MCF 10A (cell line): ENCODE measurements at regions of chr6 and their contacts with region 1.

Region 1: DNA sequence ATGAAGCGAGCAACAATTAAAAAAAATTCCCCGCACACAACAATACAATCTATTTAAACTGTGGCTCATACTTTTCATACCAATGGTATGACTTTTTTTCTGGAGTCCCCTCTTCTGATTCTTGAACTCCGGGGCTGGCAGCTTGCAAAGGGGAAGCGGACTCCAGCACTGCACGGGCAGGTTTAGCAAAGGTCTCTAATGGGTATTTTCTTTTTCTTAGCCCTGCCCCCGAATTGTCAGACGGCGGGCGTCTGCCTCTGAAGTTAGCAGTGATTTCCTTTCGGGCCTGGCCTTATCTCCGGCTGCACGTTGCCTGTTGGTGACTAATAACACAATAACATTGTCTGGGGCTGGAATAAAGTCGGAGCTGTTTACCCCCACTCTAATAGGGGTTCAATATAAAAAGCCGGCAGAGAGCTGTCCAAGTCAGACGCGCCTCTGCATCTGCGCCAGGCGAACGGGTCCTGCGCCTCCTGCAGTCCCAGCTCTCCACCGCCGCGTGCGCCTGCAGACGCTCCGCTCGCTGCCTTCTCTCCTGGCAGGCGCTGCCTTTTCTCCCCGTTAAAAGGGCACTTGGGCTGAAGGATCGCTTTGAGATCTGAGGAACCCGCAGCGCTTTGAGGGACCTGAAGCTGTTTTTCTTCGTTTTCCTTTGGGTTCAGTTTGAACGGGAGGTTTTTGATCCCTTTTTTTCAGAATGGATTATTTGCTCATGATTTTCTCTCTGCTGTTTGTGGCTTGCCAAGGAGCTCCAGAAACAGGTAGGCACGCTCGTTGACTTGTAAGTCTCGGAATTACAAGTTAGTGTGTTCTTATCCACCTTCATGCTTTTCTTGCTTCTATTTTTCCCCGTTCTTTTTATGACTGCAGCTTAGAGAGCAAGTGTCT is at the start of gene EDN1:
- DNase-seq: peak; percentile 86
- H3K4me3 Mint-ChIP-seq: peak within 1 kb of the TSS; percentile 75
- H3K27ac Mint-ChIP-seq: peak within 1 kb of the TSS; percentile 94
- H3K4me1 Mint-ChIP-seq: peaks cover 55% of the 10 kb centered on the region
- H3K27me3 Mint-ChIP-seq: no peaks in the 10 kb centered on the region
- CTCF ChIP-seq: peak; percentile 39
- total RNA-seq, gene EDN1: 1.2 and 2.7 TPM in 2 replicates

Region 2: GRCh38 chr6:11585426-11586016 is 704.7 kb before region 1 on chr6:
- CTCF ChIA-PET with region 1: interaction called, 23 read pairs
- POLR2A ChIA-PET with region 1: no interaction called
- intact Hi-C with region 1: loop called (anchors 1 kb)
- DNase-seq: peak; percentile 61
- H3K4me3 Mint-ChIP-seq: no peak overlapping the region
- H3K27ac Mint-ChIP-seq: no peak overlapping the region
- H3K4me1 Mint-ChIP-seq: no peaks in the 10 kb centered on the region
- H3K27me3 Mint-ChIP-seq: no peaks in the 10 kb centered on the region
- CTCF ChIP-seq: peak; percentile 60

Region 3: GRCh38 chr6:12150812-12151432 is 139.3 kb before region 1 on chr6:
- CTCF ChIA-PET with region 1: interaction called, 9 read pairs
- POLR2A ChIA-PET with region 1: interaction called, 5 read pairs
- intact Hi-C with region 1: loop called (anchors 1 kb)
- DNase-seq: peak; percentile 57
- H3K4me3 Mint-ChIP-seq: no peak overlapping the region
- H3K27ac Mint-ChIP-seq: no peak overlapping the region
- H3K4me1 Mint-ChIP-seq: peaks cover 17% of the 10 kb centered on the region
- H3K27me3 Mint-ChIP-seq: no peaks in the 10 kb centered on the region
- CTCF ChIP-seq: peak; percentile 69

Region 4: DNA sequence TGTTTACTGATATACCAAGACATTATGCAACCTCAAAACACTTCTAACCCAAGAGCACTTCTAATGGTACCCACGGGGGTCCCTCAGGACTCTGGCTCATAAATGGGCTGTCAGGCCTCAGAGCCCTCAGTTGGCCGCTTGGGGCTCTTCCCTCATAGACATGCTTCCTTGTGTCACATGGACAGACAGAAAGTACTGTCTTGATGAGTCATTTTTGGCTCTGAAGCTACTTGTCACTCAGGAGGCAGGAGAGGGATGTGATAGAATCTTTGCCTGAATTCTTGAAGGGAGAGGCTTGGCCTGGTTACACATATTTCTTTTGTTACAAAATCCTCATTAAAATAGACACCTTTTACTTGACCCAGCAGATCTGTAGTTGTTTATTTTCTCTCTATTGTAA is 15.1 kb before region 1 on chr6:
- CTCF ChIA-PET with region 1: interaction called, 16 read pairs
- POLR2A ChIA-PET with region 1: interaction called, 34 read pairs
- intact Hi-C with region 1: no loop called
- DNase-seq: peak; percentile 55
- H3K4me3 Mint-ChIP-seq: no peak overlapping the region
- H3K27ac Mint-ChIP-seq: peak overlapping the region; percentile 8
- H3K4me1 Mint-ChIP-seq: peaks cover 29% of the 10 kb centered on the region
- H3K27me3 Mint-ChIP-seq: no peaks in the 10 kb centered on the region
- CTCF ChIP-seq: no peak

Region 5: DNA sequence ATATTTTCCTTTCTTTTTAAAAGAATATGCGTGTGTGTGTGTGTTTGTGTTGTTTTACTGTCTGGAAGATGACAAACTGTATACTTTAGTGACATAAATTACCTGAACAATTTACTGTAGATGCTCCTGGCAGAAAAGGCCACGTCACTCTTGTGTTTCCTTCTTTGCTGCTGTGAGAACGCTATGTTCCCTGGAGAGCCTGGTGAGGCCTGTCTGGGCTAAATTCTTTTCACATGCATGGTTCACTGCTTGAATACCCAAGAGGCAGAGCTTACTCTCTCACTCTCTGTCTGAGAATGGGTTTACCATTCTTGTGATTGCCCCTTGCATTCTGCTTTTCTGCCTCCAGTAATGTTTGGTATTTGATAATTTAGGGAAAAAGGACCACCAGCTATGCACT is 64.3 kb after region 1 on chr6:
- CTCF ChIA-PET with region 1: interaction called, 4 read pairs
- POLR2A ChIA-PET with region 1: interaction called, 96 read pairs
- intact Hi-C with region 1: no loop called
- DNase-seq: peak; percentile 90
- H3K4me3 Mint-ChIP-seq: peak overlapping the region; percentile 49
- H3K27ac Mint-ChIP-seq: peak overlapping the region; percentile 83
- H3K4me1 Mint-ChIP-seq: peaks cover 39% of the 10 kb centered on the region
- H3K27me3 Mint-ChIP-seq: no peaks in the 10 kb centered on the region
- CTCF ChIP-seq: no peak

Region 6: GRCh38 chr6:12576389-12576788 is 286.2 kb after region 1 on chr6:
- CTCF ChIA-PET with region 1: interaction called, 7 read pairs
- POLR2A ChIA-PET with region 1: interaction called, 18 read pairs
- intact Hi-C with region 1: no loop called
- DNase-seq: peak; percentile 34
- H3K4me3 Mint-ChIP-seq: no peak overlapping the region
- H3K27ac Mint-ChIP-seq: peak overlapping the region; percentile 16
- H3K4me1 Mint-ChIP-seq: peaks cover 56% of the 10 kb centered on the region
- H3K27me3 Mint-ChIP-seq: no peaks in the 10 kb centered on the region
- CTCF ChIP-seq: no peak